GM10248 (cell line): ENCODE measurements at regions of chr15 and their contacts with region 1.

Region 1: GRCh38 chr15:72685925-72686794 is at the starts of genes BBS4 and HIGD2B:
- DNase-seq: peak; percentile 88
- CTCF ChIP-seq: no peak

Region 2: GRCh38 chr15:72671535-72671934 is 14.6 kb before region 1 on chr15:
- CTCF ChIA-PET with region 1: interaction called, 53 read pairs
- POLR2A ChIA-PET with region 1: no interaction called
- DNase-seq: no peak
- CTCF ChIP-seq: no peak

Region 3: GRCh38 chr15:72706266-72706665 is 20.1 kb after region 1 on chr15:
- CTCF ChIA-PET with region 1: no interaction called
- POLR2A ChIA-PET with region 1: no interaction called
- DNase-seq: no peak
- CTCF ChIP-seq: no peak